Testis (tissue), 5 donors: ENCODE measurements at regions of chr16 and their contacts with region 1.

Region 1: DNA sequence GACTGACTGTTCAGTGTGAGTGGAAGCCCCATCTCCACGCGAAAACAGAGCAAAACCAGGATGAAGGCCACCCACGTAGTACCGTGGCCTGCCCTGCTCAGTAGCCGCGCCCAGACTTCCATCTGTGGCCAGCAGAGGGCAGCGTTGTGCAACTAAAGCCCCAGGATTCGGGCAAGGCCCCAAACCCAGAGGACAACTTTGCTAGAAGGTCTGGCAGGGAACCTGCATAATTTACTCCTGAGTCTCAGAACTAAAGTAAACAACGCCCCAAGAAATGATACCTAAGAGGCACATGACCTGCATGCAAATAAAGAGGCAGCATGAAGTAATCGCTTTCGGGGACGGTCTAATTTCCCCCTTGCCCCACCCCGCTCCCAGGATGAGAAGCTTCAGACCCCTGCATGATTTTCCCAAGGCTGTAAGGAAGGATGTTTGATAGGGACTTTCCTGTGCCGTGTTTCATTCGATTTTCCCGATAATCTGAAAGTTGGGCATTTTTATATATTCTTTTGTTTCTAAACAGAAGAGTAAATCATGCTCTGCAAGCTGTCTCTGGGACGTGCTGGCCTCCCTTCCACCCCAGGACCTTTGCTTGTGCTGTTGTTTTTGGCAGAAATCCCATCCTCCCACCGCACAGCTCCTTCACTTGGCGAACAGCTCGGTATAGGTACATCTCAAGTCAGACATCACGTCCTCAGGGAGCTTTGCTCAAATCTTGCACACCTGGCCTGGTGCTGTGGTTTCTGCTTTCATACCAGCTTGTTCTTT is 18.6 kb downstream of the HSBP1 start:
- DNase-seq: peak; percentile 93
- H3K4me3 ChIP-seq: no peak overlapping the region
- H3K27ac ChIP-seq: no peak overlapping the region
- H3K4me1 ChIP-seq: peaks cover 4% of the 10 kb centered on the region
- H3K27me3 ChIP-seq: no peaks in the 10 kb centered on the region
- CTCF ChIP-seq: peak; percentile 83 to 91 (median 90)
- POLR2A ChIP-seq: no peak

Region 2: DNA sequence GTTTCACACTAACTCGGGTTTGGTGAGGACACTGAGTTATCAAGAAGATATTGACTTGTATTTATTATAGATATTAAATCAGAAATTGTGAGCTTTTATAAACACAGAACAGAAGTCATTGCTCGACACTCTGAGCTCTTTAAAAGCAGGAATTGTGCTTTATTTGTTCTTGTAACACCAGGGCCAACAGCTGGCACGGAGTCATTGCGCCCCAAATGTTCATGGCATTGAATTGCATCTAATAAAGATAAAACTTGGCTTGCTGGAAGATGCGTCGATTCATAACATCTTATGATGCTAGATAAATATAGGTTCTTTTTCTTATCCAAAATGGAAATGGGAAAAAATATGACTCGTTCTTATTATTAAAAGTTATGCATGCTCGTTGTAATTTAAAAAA is 60.8 kb after region 1 on chr16:
- intact Hi-C with region 1: loop called (anchors 10 kb)
- DNase-seq: peak; percentile 52
- H3K4me3 ChIP-seq: no peak overlapping the region
- H3K27ac ChIP-seq: no peak overlapping the region
- H3K4me1 ChIP-seq: peaks cover 9% of the 10 kb centered on the region
- H3K27me3 ChIP-seq: no peaks in the 10 kb centered on the region
- CTCF ChIP-seq: no peak
- POLR2A ChIP-seq: no peak